ENCODE measurements at regions of chr16 and their contacts with region 1.

Region 1: DNA sequence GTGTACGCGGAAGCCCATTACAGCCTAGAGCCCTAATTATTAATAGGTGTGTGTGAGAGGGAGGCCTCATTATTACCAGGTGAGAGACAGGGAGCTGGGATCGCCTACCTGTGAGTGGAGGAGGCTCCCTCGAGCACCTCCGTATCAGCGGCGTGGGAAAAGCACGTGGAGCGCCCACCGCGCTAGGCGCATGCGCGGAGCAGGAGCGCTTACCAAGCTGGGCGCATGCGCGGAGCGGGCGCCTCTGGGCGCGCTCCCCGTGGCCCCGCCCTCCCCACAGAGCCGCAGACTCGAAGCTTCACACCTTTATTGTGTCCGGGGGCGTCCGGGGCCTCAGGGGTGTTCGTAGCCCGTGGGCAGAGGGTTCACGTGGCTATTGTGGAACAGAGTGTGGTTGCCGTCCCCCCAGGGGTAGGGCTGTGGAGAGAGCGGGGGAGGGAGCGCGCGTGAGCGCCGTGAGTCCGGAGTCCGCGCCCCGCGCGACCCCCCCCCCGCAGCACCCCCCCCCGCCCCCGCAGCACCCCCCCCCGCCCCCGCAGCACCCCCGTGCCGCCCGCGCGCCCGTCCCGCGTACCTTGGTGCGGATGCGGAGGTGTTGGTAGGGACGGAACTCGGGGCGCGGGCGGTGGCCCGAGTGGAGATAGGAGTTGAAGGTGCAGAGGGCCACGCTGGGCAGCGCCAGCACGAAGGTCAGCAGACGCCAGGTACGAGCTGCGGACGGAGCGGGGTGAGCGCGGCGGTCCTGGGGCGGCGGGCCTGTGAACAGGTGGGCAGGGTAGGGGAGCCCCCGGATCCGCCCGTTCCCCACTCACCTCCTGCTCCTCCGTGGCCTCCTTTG is 500 bp downstream of the COX6A2 start:
- DNase-seq: peak; percentile 66 to 84 (median 78)
- H3K4me3 ChIP-seq: peak overlapping the region; percentile 44
- H3K27ac ChIP-seq: peak overlapping the region in 1 of 2 donors; percentile 3
- H3K4me1 ChIP-seq: peaks cover 3% of the 10 kb centered on the region
- H3K27me3 ChIP-seq: no peaks in the 10 kb centered on the region
- CTCF ChIP-seq: no peak
- EP300 ChIP-seq: no peak
- POLR2A ChIP-seq: no peak

Region 2: GRCh38 chr16:31168848-31169247 is 258.8 kb before region 1 on chr16:
- intact Hi-C with region 1: loop called in 1 of 4 experiments (anchors 5 kb)
- DNase-seq: no peak
- H3K4me3 ChIP-seq: no peak overlapping the region
- H3K27ac ChIP-seq: no peak overlapping the region
- H3K4me1 ChIP-seq: no peaks in the 10 kb centered on the region
- H3K27me3 ChIP-seq: no peaks in the 10 kb centered on the region
- CTCF ChIP-seq: no peak
- EP300 ChIP-seq: no peak
- POLR2A ChIP-seq: no peak

Region 3: GRCh38 chr16:31202414-31203375 is 225.0 kb before region 1 on chr16 and contains the start of gene PYCARD:
- intact Hi-C with region 1: loop called in 1 of 4 experiments (anchors 10 kb)
- DNase-seq: peak; percentile 26 to 66 (median 41)
- H3K4me3 ChIP-seq: peak within 1 kb of the TSS; percentile 77
- H3K27ac ChIP-seq: peak within 1 kb of the TSS; percentile 20 to 22
- H3K4me1 ChIP-seq: peaks cover 7% of the 10 kb centered on the region
- H3K27me3 ChIP-seq: no peaks in the 10 kb centered on the region
- CTCF ChIP-seq: no peak
- EP300 ChIP-seq: no peak
- POLR2A ChIP-seq: no peak
- total RNA-seq, gene PYCARD: 9.4 to 35.8 (median 20.2) TPM

Region 4: DNA sequence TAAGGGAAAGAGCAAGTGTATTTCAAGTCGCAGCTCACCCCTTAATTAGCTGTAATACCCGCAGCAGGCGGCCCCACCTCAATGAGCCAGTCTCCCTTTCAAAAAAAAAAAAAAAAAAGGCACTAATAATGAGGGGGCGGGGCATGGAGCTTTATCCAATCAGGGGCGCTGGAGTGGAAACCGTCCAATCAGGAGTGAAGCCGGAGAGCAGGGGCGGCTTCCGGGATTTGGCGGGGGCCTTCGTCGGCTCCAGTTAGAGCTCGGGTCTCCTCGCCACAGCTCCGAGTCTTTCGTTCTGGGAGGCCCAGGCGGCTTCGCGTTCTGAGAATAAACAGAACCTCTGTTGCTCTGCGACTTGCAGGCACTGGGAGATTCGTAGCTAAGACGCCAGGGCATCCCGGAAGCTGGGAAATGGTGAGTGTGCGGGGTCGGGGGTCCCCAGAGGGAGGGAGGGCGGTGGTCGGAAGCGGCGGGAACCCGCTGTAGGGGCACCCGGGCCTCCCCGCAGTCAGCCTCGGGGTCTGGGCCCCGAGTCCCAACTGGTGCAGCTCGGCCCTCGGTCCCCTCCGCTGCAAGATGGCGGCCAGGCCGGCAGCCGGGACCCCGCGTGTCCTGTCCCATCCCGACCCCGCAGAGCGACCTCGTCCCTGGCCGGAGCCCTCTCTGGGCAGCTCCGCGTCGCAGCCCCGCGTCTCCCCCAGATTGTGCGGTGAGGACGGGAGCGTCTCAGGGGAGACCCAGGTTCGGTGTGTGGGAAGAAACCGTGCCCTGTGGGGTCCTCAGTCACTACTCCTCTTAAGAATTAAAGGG is 446.1 kb after region 1 on chr16 and contains the start of gene ZNF267:
- intact Hi-C with region 1: loop called in 1 of 4 experiments (anchors 10 kb)
- DNase-seq: peak; percentile 94 to 97 (median 96)
- H3K4me3 ChIP-seq: peak within 1 kb of the TSS; percentile 71
- H3K27ac ChIP-seq: peak within 1 kb of the TSS; percentile 82 to 87
- H3K4me1 ChIP-seq: no peaks in the 10 kb centered on the region
- H3K27me3 ChIP-seq: no peaks in the 10 kb centered on the region
- CTCF ChIP-seq: no peak
- EP300 ChIP-seq: no peak
- POLR2A ChIP-seq: peak; percentile 54
- total RNA-seq, gene ZNF267: 10.0 to 16.3 (median 13.6) TPM